Dorsolateral prefrontal cortex (tissue), 120 donors: ENCODE measurements at regions of chr22 and their contacts with region 1.

Region 1: GRCh38 chr22:42169055-42169469 is 38.5 kb upstream of the CYP2D6 start:
- DNase-seq: peak; percentile 62 to 91 (median 76)
- H3K4me3 ChIP-seq: no peak overlapping the region
- H3K27ac ChIP-seq: peak overlapping the region in 17 of 59 donors; percentile 2 to 86 (median 29)
- H3K27me3 ChIP-seq: no peaks in the 10 kb centered on the region
- CTCF ChIP-seq: peak; percentile 74 to 100 (median 95)

Region 2: DNA sequence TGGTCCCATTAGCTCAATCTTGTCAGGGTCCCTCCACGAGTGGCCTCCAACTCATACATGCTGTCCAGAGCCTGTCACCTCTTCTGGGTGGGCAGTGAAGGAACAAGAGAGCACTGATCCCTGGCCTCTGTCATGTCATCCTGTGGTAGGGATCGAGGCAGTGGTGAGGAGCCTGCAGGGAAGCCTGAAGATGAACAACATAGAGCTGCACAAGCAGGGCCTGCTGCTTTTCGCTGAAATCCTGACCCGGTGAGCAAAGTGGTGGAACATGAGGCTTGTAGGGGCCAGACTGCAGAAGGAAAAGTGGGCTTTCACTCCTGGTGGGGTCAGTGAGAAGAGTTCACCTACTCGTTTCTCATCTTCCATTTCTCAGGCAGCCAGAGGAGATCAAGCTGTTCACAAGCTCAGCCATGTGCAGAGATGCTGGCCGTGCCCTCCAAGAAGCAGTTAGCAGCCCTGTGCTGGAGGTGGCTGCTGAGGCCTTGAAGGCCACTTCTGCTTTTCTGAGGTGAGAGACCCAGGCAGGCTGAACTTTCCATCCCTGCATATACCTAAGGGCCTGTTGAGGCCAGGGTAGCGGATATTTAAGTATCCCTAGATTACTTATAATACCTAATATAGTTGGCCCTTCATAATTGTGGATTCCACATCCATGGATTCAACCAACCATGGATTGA is 436.8 kb before region 1 on chr22:
- intact Hi-C with region 1: no loop called
- DNase-seq: no peak
- H3K4me3 ChIP-seq: no peak overlapping the region
- H3K27ac ChIP-seq: no peak overlapping the region
- H3K27me3 ChIP-seq: no peaks in the 10 kb centered on the region
- CTCF ChIP-seq: no peak

Region 3: DNA sequence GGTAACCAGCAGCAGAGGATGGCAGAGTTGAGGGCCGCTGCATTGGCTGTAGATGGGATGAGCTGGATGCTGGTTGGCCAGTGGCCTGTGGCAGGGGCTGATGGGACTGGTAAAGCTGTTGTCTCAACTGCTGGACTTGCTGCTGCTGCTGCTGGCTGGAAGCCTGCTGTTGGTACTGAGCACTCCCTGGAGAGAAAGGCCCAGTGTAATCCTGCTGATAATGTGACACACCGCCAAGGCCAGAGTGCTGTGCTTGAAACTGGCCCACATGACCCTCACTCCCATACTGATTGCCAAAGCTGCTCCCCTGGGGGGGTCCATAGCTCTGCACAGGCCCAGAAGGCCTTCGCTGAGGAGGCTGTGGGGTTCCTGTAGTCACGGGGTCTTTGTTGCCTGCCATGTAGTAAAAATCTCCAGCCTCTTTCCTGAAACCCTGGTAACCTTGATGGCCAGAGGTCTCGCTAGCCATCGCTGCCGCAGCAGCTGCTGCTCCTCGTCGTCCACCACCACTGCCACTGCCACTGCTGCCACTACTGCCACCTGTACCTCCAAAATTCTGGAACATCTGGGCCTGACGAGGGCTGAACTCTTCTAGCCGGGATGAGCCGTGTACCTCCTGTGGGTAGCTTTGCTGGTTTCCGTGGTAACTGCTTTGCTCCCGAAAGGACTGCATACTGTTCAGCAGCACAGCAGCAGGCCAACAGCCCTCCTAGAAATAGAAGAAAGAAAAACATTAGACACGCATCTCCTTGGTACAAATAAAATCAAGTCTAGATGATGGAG is 45.8 kb after region 1 on chr22:
- intact Hi-C with region 1: loop called in 1 of 2 experiments (anchors 5 kb)
- DNase-seq: peak; percentile 26 to 92 (median 89)
- H3K4me3 ChIP-seq: peak overlapping the region in 11 of 59 donors; percentile 0 to 37 (median 14)
- H3K27ac ChIP-seq: peak overlapping the region; percentile 52 to 96 (median 92)
- H3K27me3 ChIP-seq: no peaks in the 10 kb centered on the region
- CTCF ChIP-seq: peak in 5 of 56 donors; percentile 12 to 38 (median 15)

Region 4: GRCh38 chr22:42270512-42271417 is 101.7 kb after region 1 on chr22 and contains the start of gene TCF20:
- intact Hi-C with region 1: loop called in 1 of 2 experiments (anchors 5 kb)
- DNase-seq: peak in 9 of 10 donors; percentile 60 to 82 (median 72)
- H3K4me3 ChIP-seq: peak within 1 kb of the TSS; percentile 66 to 99 (median 95)
- H3K27ac ChIP-seq: peak within 1 kb of the TSS in 53 of 59 donors; percentile 29 to 92 (median 71)
- H3K27me3 ChIP-seq: no peaks in the 10 kb centered on the region
- CTCF ChIP-seq: no peak
- total RNA-seq, gene TCF20: 46.9 to 80.5 (median 64.3) TPM

Region 5: GRCh38 chr22:42283278-42284201 is 114.5 kb after region 1 on chr22:
- intact Hi-C with region 1: loop called in 1 of 2 experiments (anchors 5 kb)
- DNase-seq: peak in 6 of 10 donors; percentile 30 to 67 (median 58)
- H3K4me3 ChIP-seq: peak overlapping the region; percentile 34 to 69 (median 56)
- H3K27ac ChIP-seq: peak overlapping the region in 46 of 59 donors; percentile 9 to 80 (median 65)
- H3K27me3 ChIP-seq: no peaks in the 10 kb centered on the region
- CTCF ChIP-seq: no peak